GM12878 (cell line): ENCODE measurements at regions of chr5 and their contacts with region 1.

Region 1: GRCh38 chr5:174311531-174312269 is 266.2 kb downstream of the NSG2 start:
- DNase-seq: no peak
- ATAC-seq: peak; percentile 97
- H3K4me3 ChIP-seq: peak overlapping the region; percentile 50; the same call in 1 of the 2 replicates
- H3K27ac ChIP-seq: no peak overlapping the region
- H3K4me1 ChIP-seq: no peaks in the 10 kb centered on the region
- H3K27me3 ChIP-seq: peaks cover 0 to 2% of the 10 kb centered on the region in 2 experiments; a peak in 2 of 4 replicates
- CTCF ChIP-seq: peak; percentile 64 to 85 (median 84)
- EP300 ChIP-seq: no peak
- POLR2A ChIP-seq: no peak
- RAD21 ChIP-seq: peak; percentile 75

Region 2: GRCh38 chr5:174020397-174021296 is 291.1 kb before region 1 on chr5:
- CTCF ChIA-PET with region 1: interaction called, 6 read pairs
- POLR2A ChIA-PET with region 1: no interaction called
- RAD21 ChIA-PET with region 1: interaction called, 3 read pairs
- SMC1A ChIA-PET with region 1: no interaction called
- in situ Hi-C with region 1: no loop called
- intact Hi-C with region 1: loop called (anchors 1 kb)
- DNase-seq: peak; percentile 1
- ATAC-seq: peak; percentile 72
- H3K4me3 ChIP-seq: no peak overlapping the region
- H3K27ac ChIP-seq: no peak overlapping the region
- H3K4me1 ChIP-seq: no peaks in the 10 kb centered on the region
- H3K27me3 ChIP-seq: peaks cover 3% of the 10 kb centered on the region in 2 experiments; a peak in 3 of 4 replicates
- CTCF ChIP-seq: peak; percentile 51 to 61 (median 55); a peak in 5 of 6 replicates
- EP300 ChIP-seq: no peak
- POLR2A ChIP-seq: no peak
- RAD21 ChIP-seq: peak; percentile 71

Region 3: GRCh38 chr5:174045470-174046025 is 266.2 kb before region 1 on chr5 and contains the start of gene NSG2:
- CTCF ChIA-PET with region 1: interaction called, 38 read pairs
- POLR2A ChIA-PET with region 1: no interaction called
- RAD21 ChIA-PET with region 1: interaction called, 38 read pairs
- SMC1A ChIA-PET with region 1: interaction called, 23 read pairs
- in situ Hi-C with region 1: loop called (anchors 5 kb)
- intact Hi-C with region 1: loop called (anchors 1 kb)
- DNase-seq: peak; percentile 16
- ATAC-seq: peak; percentile 99
- H3K4me3 ChIP-seq: no peak within 1 kb of the TSS
- H3K27ac ChIP-seq: no peak within 1 kb of the TSS
- H3K4me1 ChIP-seq: no peaks in the 10 kb centered on the region
- H3K27me3 ChIP-seq: no peaks in the 10 kb centered on the region
- CTCF ChIP-seq: peak; percentile 70 to 92 (median 74)
- EP300 ChIP-seq: no peak
- POLR2A ChIP-seq: no peak
- RAD21 ChIP-seq: peak; percentile 97
- polyA plus RNA-seq, gene NSG2: not detected

Region 4: DNA sequence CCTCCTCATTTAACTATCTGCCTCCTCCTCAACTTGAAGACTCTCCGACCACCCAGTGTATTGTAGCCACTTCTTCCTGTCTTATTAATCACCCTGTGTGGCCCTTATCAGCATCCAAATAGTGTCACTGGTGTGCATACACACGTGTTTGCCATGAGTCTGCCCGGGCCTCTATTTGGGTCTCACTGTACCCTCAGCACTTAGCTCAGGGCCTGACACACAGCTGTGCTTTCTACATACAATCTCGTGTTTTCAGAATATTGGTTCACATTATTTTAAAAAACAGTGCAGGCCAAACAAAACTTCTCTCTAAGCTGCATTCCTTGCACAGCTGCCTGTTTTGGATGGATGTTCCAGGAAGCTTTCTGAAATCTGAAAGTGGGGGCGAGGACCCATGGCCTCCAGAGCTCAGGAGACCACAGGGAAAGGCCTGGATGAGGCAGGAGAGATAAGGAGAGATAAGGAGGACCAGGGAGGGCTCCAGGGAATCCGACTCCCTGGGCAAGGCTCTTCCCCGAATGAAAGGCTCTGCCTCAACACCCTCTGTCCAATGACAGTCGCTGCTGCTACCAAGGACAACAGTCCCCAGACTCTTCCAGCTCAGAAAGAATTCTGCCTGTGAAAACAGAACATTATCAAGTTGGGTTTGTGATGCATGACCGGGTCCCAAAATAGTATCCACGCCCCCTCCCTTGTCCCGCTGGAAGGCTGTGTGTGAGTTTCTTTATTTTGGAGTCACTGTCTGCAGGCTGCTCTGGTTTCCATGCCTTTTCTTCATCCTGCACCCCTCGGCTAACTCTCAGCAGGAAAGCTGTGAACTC is 10.5 kb before region 1 on chr5:
- CTCF ChIA-PET with region 1: interaction called, 15 read pairs
- POLR2A ChIA-PET with region 1: no interaction called
- RAD21 ChIA-PET with region 1: interaction called, 7 read pairs
- SMC1A ChIA-PET with region 1: interaction called, 3 read pairs
- in situ Hi-C with region 1: no loop called
- intact Hi-C with region 1: no loop called
- DNase-seq: no peak
- ATAC-seq: peak; percentile 42
- H3K4me3 ChIP-seq: no peak overlapping the region
- H3K27ac ChIP-seq: peak overlapping the region; percentile 25; the same call in 1 of the 2 replicates
- H3K4me1 ChIP-seq: peaks cover 19% of the 10 kb centered on the region
- H3K27me3 ChIP-seq: no peaks in the 10 kb centered on the region
- CTCF ChIP-seq: no peak
- EP300 ChIP-seq: no peak
- POLR2A ChIP-seq: no peak
- RAD21 ChIP-seq: no peak